HepG2 (cell line): ENCODE measurements at regions of chr2 and their contacts with region 1.

Region 1: GRCh38 chr2:197434541-197435513 is at the start of gene SF3B1:
- DNase-seq: peak; percentile 97
- ATAC-seq: peak; percentile 90
- H3K4me3 ChIP-seq: peak within 1 kb of the TSS; percentile 86 to 99 (median 99)
- H3K27ac ChIP-seq: peak within 1 kb of the TSS; percentile 95
- H3K4me1 ChIP-seq: peaks cover 52% of the 10 kb centered on the region
- H3K27me3 ChIP-seq: peaks cover 0 to 4% of the 10 kb centered on the region in 2 experiments; a peak in 1 of 5 replicates
- CTCF ChIP-seq: 0 out of 2 replicates have a peak, but pooled peaks have one; percentile 19
- EP300 ChIP-seq: peak in 1 of 2 experiments; percentile 48; a peak in 2 of 4 replicates
- POLR2A ChIP-seq: peak; percentile 97 to 98
- RAD21 ChIP-seq: peak; percentile 46
- total RNA-seq, gene SF3B1: 387 and 499 TPM in 2 replicates

Region 2: GRCh38 chr2:197445746-197446145 is 10.9 kb after region 1 on chr2:
- CTCF ChIA-PET with region 1: no interaction called
- POLR2A ChIA-PET with region 1: interaction called, 306 read pairs
- in situ Hi-C with region 1: no loop called
- intact Hi-C with region 1: no loop called
- DNase-seq: no peak
- ATAC-seq: no peak; the same call in 2 of the 3 replicates
- H3K4me3 ChIP-seq: no peak overlapping the region
- H3K27ac ChIP-seq: no peak overlapping the region
- H3K4me1 ChIP-seq: peaks cover 7% of the 10 kb centered on the region; the same call in 1 of the 2 replicates
- H3K27me3 ChIP-seq: no peaks in the 10 kb centered on the region
- CTCF ChIP-seq: no peak
- EP300 ChIP-seq: no peak
- POLR2A ChIP-seq: no peak
- RAD21 ChIP-seq: no peak

Region 3: DNA sequence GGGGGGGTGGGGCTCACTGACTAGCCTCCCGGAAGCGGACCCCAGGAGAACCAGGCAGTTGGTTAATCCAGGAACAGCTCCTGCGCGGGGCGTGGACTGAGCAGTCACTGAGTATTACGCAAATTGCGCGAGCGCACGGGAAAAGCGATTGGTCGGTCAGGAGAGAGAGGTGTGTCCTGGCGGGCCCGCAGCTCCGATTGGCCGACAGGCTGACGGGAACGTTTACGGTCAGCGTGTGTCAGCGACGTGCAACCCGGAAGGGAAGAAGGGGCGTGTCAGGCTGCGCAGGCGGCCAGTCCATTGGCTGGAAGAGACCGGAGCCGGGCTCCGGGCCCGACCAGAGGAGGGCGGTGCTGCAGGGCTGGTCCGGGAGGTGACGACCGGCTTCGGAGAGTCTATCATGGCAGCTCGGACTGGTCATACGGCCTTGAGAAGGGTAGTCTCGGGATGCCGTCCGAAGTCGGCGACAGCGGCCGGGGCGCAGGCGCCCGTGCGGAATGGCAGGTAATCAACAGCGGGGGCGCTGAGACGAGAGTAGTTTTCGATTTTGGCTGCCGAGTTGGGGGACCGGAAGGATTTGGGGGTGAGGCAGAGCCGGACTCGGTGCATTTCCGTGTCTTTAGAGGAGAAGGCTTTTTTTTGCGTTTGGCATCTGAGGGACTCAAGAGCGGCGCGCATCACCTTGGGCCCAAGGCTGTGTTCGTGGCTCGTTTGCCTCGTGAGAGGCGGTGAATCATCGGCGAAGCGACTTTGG is 18.5 kb after region 1 on chr2 and contains the start of gene COQ10B:
- CTCF ChIA-PET with region 1: no interaction called
- POLR2A ChIA-PET with region 1: interaction called, 306 read pairs
- in situ Hi-C with region 1: no loop called
- intact Hi-C with region 1: loop called (anchors 1 kb)
- DNase-seq: peak; percentile 100
- ATAC-seq: peak; percentile 89
- H3K4me3 ChIP-seq: peak within 1 kb of the TSS; percentile 80 to 96 (median 95)
- H3K27ac ChIP-seq: peak within 1 kb of the TSS; percentile 97
- H3K4me1 ChIP-seq: peaks cover 31% of the 10 kb centered on the region
- H3K27me3 ChIP-seq: no peaks in the 10 kb centered on the region; a peak in 1 of 5 replicates
- CTCF ChIP-seq: peak; percentile 73
- EP300 ChIP-seq: peak; percentile 37 to 56; a peak in 2 of 4 replicates
- POLR2A ChIP-seq: peak; percentile 72 to 97
- RAD21 ChIP-seq: peak; percentile 81
- total RNA-seq, gene COQ10B: 34.9 and 41.8 TPM in 2 replicates

Region 4: GRCh38 chr2:197480165-197481036 is 45.6 kb after region 1 on chr2:
- CTCF ChIA-PET with region 1: no interaction called
- POLR2A ChIA-PET with region 1: interaction called, 41 read pairs
- in situ Hi-C with region 1: no loop called
- intact Hi-C with region 1: no loop called
- DNase-seq: no peak
- ATAC-seq: peak; percentile 32
- H3K4me3 ChIP-seq: peak overlapping the region; percentile 26 to 63 (median 38); a peak in 5 of 6 replicates
- H3K27ac ChIP-seq: peak overlapping the region; percentile 91
- H3K4me1 ChIP-seq: peaks cover 69% of the 10 kb centered on the region
- H3K27me3 ChIP-seq: no peaks in the 10 kb centered on the region
- CTCF ChIP-seq: no peak
- EP300 ChIP-seq: no peak
- POLR2A ChIP-seq: no peak
- RAD21 ChIP-seq: no peak

Region 5: GRCh38 chr2:197615016-197615652 is 180.3 kb after region 1 on chr2:
- CTCF ChIA-PET with region 1: no interaction called
- POLR2A ChIA-PET with region 1: interaction called, 12 read pairs
- in situ Hi-C with region 1: no loop called
- intact Hi-C with region 1: no loop called
- DNase-seq: peak; percentile 27
- ATAC-seq: peak; percentile 57
- H3K4me3 ChIP-seq: no peak overlapping the region
- H3K27ac ChIP-seq: no peak overlapping the region
- H3K4me1 ChIP-seq: peaks cover 34% of the 10 kb centered on the region
- H3K27me3 ChIP-seq: peaks cover 1 to 40% of the 10 kb centered on the region in 2 experiments; a peak in 4 of 5 replicates
- CTCF ChIP-seq: peak; percentile 75
- EP300 ChIP-seq: no peak
- POLR2A ChIP-seq: no peak
- RAD21 ChIP-seq: no peak

Region 6: GRCh38 chr2:197705121-197705911 is 270.5 kb after region 1 on chr2 and contains the start of gene MARS2:
- CTCF ChIA-PET with region 1: no interaction called
- POLR2A ChIA-PET with region 1: interaction called, 11 read pairs
- in situ Hi-C with region 1: no loop called
- intact Hi-C with region 1: loop called (anchors 5 kb)
- DNase-seq: peak; percentile 88
- ATAC-seq: peak; percentile 88
- H3K4me3 ChIP-seq: peak within 1 kb of the TSS; percentile 60 to 86 (median 85)
- H3K27ac ChIP-seq: peak within 1 kb of the TSS; percentile 54
- H3K4me1 ChIP-seq: peaks cover 30% of the 10 kb centered on the region
- H3K27me3 ChIP-seq: no peaks in the 10 kb centered on the region; a peak in 1 of 5 replicates
- CTCF ChIP-seq: peak; percentile 42
- EP300 ChIP-seq: no peak; a peak in 1 of 4 replicates
- POLR2A ChIP-seq: peak; percentile 93 to 97
- RAD21 ChIP-seq: peak; percentile 17; the same call in 1 of the 2 replicates
- total RNA-seq, gene MARS2: 16.2 and 19.5 TPM in 2 replicates